ENCODE measurements at regions of chr9 and their contacts with region 1.

Region 1: GRCh38 chr9:75148561-75148960 is 60.2 kb downstream of the OSTF1 start:
- DNase-seq: peak; percentile 32
- H3K4me3 Mint-ChIP-seq: no peak overlapping the region
- H3K27ac Mint-ChIP-seq: peak overlapping the region; percentile 83
- H3K4me1 Mint-ChIP-seq: peaks cover 64% of the 10 kb centered on the region
- H3K27me3 Mint-ChIP-seq: no peaks in the 10 kb centered on the region

Region 2: DNA sequence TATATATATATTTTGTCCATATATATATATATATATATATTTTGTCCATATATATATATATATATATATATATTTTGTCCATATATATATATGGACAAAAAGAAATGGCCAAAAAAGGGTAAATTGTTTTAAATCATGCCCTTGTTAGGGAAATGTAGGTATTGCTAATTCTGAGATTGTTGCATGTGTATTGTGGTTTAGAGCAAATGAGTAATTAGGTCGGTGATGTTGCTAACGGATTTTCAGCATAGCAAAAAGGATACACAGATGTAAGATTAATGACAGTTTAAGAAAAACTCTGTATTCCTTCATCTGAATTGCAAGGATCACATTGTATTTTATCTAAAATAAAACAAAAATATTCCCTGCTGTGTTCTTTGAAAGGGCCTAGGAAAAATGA is 20.0 kb before region 1 on chr9:
- CTCF ChIA-PET with region 1: no interaction called
- intact Hi-C with region 1: loop called (anchors 1 kb)
- DNase-seq: no peak
- H3K4me3 Mint-ChIP-seq: no peak overlapping the region
- H3K27ac Mint-ChIP-seq: no peak overlapping the region
- H3K4me1 Mint-ChIP-seq: peaks cover 43% of the 10 kb centered on the region
- H3K27me3 Mint-ChIP-seq: no peaks in the 10 kb centered on the region

Region 3: GRCh38 chr9:75170898-75171360 is 22.4 kb after region 1 on chr9:
- CTCF ChIA-PET with region 1: no interaction called
- intact Hi-C with region 1: loop called (anchors 2 kb)
- DNase-seq: no peak
- H3K4me3 Mint-ChIP-seq: no peak overlapping the region
- H3K27ac Mint-ChIP-seq: no peak overlapping the region
- H3K4me1 Mint-ChIP-seq: peaks cover 15% of the 10 kb centered on the region
- H3K27me3 Mint-ChIP-seq: no peaks in the 10 kb centered on the region

Region 4: GRCh38 chr9:76203373-76203772 is 1054.8 kb after region 1 on chr9:
- CTCF ChIA-PET with region 1: no interaction called
- intact Hi-C with region 1: no loop called
- DNase-seq: no peak
- H3K4me3 Mint-ChIP-seq: no peak overlapping the region
- H3K27ac Mint-ChIP-seq: no peak overlapping the region
- H3K4me1 Mint-ChIP-seq: no peaks in the 10 kb centered on the region
- H3K27me3 Mint-ChIP-seq: peaks cover 4% of the 10 kb centered on the region